ENCODE measurements at regions of chr18 and their contacts with region 1.

Region 1: DNA sequence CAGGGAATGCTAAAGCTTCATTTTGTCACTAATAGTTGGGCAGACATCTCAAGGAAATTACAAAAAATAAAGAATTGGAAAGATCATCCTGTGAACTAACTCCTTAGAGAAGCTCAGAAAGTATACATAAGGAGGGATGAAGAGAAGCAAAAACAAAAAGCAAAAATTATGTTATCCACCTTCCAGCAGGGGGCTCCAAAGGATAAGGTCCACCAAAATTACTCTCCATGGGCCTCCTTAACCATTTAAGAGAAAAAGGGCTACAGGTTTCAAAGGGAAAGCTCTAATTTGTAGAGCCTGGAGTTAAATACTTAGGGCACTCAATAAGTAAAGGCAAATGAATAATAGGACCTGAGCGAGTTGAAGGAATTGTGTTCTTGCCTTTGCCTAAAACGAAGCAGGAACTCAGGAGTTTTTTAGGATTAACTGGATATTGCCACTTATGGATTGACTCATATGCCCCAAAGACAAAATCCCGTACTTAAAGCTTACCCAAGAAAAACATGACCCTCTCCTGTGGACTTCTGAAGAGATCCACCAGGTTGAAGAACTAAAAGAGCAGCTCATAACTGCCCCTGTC is 1167.9 kb downstream of the DSC3 start:
- DNase-seq: peak; percentile 4
- H3K27ac ChIP-seq: no peak overlapping the region
- CTCF ChIP-seq: peak; percentile 56

Region 2: GRCh38 chr18:30280880-30281470 is 406.4 kb after region 1 on chr18:
- CTCF ChIA-PET with region 1: interaction called, 11 read pairs
- POLR2A ChIA-PET with region 1: no interaction called
- DNase-seq: peak; percentile 1
- H3K27ac ChIP-seq: no peak overlapping the region
- CTCF ChIP-seq: peak; percentile 77

Measured in RWPE1 (cell line).